Right lobe of liver (tissue), 6 donors: ENCODE measurements at regions of chr16 and their contacts with region 1.

Region 1: DNA sequence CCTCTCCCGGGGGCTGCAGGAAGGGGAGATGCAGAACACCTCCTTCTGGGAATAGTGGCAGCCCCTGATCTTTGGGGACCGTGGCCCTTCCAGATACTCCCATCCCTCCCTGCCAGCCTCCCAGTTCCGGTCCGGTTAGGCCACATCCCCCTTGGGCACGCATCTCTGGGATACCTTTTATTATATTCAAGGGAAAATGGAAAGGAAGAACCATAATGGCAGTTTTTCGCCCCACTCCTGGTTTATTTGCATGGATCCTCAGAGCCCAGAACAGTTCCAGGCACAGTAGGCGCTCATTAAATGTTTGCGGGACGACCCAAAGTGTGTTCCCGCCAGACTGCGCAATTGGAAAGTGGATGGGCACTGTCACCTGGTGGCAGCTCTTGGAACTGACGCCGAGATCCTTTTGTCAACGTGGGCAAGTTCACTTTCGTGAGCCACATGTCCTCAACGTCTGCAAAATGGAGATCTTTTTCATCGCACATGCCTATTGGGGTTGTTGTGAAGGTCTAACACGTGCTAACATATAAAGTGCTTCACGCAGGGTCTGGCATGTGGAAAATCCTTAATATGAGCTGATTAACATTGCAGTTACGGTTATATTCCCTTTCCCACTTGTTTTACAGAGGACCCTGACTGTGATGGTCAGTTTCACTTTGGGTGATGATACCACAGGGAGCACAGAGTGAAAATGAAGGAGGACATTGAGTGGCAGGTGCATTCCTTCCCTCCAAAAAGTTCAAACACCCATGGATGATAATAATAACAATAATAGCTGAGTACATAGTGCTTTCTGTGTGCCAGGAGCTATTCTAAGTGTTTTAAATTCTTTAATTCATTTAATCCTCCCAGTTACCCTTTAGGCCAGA is 1.7 kb upstream of the GPRC5B start:
- DNase-seq: peak; percentile 71 to 76 (median 72)
- ATAC-seq: peak; percentile 75 to 83 (median 80)
- H3K4me3 ChIP-seq: peak overlapping the region in 2 of 3 donors; percentile 12 to 23
- H3K27ac ChIP-seq: no peak overlapping the region
- H3K4me1 ChIP-seq: peaks cover 0 to 12% (median 5%) of the 10 kb centered on the region in 4 donors
- H3K27me3 ChIP-seq: no peaks in the 10 kb centered on the region
- CTCF ChIP-seq: peak; percentile 99
- POLR2A ChIP-seq: no peak

Region 2: DNA sequence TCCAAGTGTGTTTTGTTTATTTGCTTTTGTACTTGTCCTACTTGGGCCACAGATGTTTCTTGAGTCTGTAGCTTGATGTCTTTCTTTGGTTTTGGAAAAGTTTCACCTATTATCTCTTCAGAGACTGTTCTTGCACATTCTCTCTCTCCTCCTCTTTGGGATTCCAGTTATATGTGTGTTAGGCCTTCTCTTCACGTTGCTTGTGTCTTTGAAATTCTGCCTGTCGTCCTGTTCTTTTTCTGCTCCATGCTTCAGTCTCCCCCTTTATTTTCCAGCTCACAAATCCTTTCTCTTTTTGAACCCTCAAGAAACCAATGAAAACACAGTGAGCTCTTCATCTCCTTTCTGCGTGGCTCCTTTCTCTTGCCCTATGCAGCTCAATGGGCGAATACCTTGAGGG is 322.9 kb before region 1 on chr16:
- intact Hi-C with region 1: loop called in 1 of 2 experiments (anchors 5 kb)
- DNase-seq: no peak
- ATAC-seq: no peak
- H3K4me3 ChIP-seq: no peak overlapping the region
- H3K27ac ChIP-seq: no peak overlapping the region
- H3K4me1 ChIP-seq: no peaks in the 10 kb centered on the region
- H3K27me3 ChIP-seq: no peaks in the 10 kb centered on the region
- CTCF ChIP-seq: no peak
- POLR2A ChIP-seq: no peak

Region 3: DNA sequence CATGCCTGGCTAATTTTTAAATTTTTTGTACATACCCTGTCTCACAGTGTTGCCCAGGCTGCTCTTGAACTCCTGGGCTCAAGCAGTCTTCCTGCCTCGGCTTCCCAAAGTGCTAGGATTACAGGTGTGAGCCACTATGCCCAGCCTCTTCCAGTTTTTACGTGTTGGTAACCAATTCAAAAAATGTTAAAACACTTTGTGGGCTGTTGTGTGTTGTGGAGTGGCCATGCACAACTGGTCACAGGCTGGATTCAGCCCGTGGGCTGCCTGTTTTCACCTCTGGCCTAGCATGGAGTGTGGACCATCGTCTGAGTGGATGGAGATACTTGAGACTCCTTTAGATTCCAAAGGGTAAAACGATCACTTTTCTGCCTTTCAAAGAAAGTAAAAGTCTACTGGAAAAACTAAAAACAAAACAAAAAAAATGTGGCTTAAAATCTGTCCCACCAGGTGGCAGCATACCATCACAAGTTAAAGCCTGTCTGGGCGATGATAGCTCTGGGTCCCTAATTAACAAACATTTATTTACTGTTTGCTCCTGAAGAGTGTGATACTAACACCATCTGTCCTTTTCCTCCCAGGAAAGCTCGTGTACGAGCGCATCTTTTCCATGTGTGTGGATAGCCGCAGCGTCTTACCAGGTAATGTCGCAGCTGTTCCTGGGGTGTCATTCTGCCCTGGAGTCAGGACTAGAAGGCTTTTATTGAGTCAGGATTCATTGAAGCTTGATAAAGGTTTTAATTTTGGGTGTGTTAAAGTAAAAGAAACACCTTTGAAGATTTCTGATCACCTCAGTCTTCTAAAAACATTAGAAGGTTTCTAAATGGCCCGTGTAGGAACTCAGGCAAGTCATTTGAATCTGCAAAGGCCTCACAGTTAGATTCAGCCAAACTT is 285.0 kb before region 1 on chr16:
- intact Hi-C with region 1: loop called (anchors 5 kb)
- DNase-seq: no peak
- ATAC-seq: peak in 1 of 4 donors; percentile 50
- H3K4me3 ChIP-seq: no peak overlapping the region
- H3K27ac ChIP-seq: no peak overlapping the region
- H3K4me1 ChIP-seq: no peaks in the 10 kb centered on the region
- H3K27me3 ChIP-seq: no peaks in the 10 kb centered on the region
- CTCF ChIP-seq: peak; percentile 62 to 65 (median 64)
- POLR2A ChIP-seq: no peak

Region 4: DNA sequence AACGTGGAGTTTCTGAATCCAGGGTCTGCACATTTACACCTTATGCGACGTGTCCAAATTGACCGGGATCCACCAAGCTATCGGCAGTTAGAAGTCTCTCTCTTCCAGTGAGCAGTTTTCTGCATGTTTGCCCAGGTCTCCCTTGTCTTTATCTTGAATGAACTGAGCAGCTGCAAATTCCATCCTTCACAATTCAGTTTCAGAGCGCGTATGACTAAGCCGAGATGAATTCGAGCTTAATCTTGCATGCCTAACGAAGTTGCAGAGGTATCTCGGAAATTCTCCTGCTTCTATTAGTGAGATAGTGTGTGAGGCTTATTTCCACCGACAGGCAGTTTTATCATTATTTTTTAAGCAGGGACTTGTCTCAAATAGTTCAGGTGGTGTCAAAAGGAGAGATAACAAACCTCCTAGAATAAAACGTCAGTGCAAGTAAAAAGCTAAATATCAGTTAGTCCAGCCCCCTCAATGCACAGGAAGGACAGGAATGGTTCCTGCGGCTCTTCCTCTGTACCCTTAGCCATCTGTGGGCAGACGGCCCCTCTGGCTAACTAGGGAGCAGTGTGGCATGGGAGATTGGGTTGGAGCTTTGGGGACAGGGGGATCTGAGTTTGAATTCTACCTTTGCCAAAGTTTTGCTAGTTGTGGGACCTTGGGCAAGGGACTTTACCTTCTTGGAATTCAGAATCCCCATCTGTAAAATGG is 280.4 kb after region 1 on chr16:
- intact Hi-C with region 1: no loop called
- DNase-seq: no peak
- ATAC-seq: no peak
- H3K4me3 ChIP-seq: no peak overlapping the region
- H3K27ac ChIP-seq: no peak overlapping the region
- H3K4me1 ChIP-seq: no peaks in the 10 kb centered on the region
- H3K27me3 ChIP-seq: no peaks in the 10 kb centered on the region
- CTCF ChIP-seq: no peak
- POLR2A ChIP-seq: no peak